ENCODE measurements at regions of chr19 and their contacts with region 1.

Region 1: DNA sequence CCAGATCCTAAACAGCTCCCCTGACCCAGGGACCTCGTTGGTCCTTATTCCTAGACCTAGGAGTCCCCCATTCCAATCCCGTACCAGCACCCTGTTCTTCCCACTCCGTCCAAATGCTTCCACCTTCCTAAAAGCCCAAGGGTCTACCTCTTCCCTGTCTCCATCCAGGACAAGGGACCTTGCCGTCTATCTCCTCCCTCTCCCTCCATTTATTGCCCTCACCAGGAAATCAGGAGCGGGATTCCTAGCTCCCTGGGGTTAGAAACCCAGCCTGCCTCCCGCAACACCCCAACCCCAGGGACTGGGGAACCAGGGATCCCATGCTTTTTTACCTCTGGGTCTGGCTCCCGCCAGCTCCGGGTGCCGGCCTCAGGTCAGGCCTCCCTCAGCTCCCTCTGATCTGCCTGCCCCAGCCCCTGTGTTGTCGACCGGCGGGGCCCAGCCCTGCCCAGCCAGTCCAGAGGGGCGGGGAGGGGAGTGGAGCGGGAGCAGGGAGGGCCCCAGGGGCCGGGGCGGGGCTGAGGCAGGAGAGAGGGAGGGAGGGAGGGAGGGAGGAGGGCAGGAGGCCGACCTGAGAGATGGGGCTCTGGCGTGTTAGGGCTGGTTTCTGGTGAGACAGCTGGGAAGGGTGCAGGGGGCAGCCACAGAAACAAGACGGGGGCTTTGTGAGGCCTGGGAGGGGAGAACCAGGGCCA is at the start of gene B3GNT8:
- DNase-seq: peak; percentile 89 to 92
- H3K4me3 ChIP-seq: peak within 1 kb of the TSS; percentile 49 to 63
- H3K27ac ChIP-seq: peak within 1 kb of the TSS; percentile 78
- H3K4me1 ChIP-seq: peaks cover 0 to 28% (median 25%) of the 10 kb centered on the region in 4 donors
- H3K27me3 ChIP-seq: no peaks in the 10 kb centered on the region
- CTCF ChIP-seq: no peak

Region 2: GRCh38 chr19:41363753-41364523 is 63.2 kb before region 1 on chr19 and contains the start of gene B9D2:
- intact Hi-C with region 1: loop called (anchors 10 kb)
- DNase-seq: peak; percentile 99
- H3K4me3 ChIP-seq: peak within 1 kb of the TSS; percentile 65 to 66
- H3K27ac ChIP-seq: peak within 1 kb of the TSS; percentile 90 to 95
- H3K4me1 ChIP-seq: peaks cover 0 to 26% (median 13%) of the 10 kb centered on the region in 4 donors
- H3K27me3 ChIP-seq: no peaks in the 10 kb centered on the region
- CTCF ChIP-seq: no peak

Region 3: DNA sequence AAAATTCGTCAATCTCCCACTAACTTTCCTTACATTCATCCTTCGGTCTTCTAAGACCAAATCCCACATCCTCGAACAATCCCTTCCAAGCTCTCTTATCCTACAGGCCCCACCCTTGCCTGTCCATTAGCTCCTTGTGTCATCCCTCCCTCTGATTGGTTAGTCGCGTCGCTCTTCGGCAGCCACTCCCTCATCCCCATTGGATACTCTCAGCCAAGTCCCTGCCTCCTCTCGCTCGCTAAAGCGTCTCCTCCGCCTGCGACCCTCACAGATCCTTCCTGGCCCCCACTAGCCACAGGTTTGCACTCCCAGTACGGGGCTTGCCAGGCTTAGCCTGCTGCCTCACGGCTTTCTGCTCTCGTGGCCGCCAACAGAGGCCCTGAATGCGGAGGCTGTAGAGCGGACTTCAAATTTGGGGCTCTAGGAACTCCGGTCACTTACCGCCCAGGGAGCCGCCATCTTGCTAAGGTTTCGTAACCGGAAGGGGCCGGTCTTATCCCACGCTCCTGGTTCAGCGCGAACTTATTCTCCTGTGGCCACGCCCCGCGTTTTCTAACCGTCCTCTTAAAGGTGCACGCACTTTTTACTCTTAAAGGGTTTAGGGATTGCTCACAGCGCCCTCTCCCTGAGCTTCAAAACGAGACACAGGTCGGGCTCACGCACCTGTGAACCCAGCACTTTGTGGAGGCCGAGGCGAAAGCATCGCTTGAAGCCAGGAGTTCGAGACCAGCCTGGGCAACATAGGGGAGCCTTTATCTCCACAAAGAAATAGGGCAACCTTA is 12.5 kb after region 1 on chr19 and contains the start of gene DMAC2:
- intact Hi-C with region 1: no loop called
- DNase-seq: peak; percentile 98 to 99
- H3K4me3 ChIP-seq: peak within 1 kb of the TSS; percentile 65 to 66
- H3K27ac ChIP-seq: peak within 1 kb of the TSS; percentile 79 to 88
- H3K4me1 ChIP-seq: peaks cover 0 to 9% (median 6%) of the 10 kb centered on the region in 4 donors
- H3K27me3 ChIP-seq: peaks cover 0 to 23% of the 10 kb centered on the region in 2 donors
- CTCF ChIP-seq: peak; percentile 33 to 35

Measured in tibial artery (tissue), 4 donors.